ENCODE measurements at regions of chr15 and their contacts with region 1.

Region 1: DNA sequence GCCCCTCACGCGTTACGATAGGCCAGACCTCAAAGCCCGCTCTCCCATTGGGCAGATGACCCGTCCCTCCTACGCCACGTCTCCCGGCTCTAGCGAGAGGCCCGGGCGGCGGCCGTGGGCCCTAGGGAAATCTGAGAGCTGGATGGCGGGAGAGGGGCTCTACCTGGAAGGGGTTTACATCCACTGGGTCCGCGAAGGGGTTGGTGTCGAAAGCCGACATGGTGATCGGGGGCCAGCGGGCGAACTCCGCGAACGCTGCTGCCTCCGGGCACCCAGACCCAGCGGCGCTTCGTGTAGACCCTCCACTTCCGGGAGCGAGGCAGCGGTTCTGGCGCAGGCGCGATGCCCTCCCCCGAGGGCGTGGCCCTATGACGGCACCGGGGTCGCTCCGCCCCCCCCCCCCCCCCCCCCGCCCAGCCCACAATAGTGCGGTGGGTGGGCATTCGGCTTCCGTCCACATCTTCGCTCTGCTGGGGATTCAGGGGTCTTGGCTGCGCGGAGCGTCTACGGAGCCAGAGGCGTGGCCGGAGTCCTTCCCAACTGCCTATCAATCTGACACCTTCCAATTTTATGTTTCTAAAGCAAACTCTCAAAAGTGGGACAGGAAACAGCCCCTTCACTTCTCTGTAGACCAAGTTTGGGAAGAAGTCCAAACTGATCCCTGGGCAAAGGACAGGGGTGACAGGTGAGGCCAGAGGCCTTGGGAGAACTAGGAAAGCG is at the start of gene SCAMP2:
- DNase-seq: peak; percentile 89
- H3K4me3 Mint-ChIP-seq: peak within 1 kb of the TSS; percentile 98
- H3K27ac Mint-ChIP-seq: peak within 1 kb of the TSS; percentile 89
- H3K4me1 Mint-ChIP-seq: peaks cover 34% of the 10 kb centered on the region
- H3K27me3 Mint-ChIP-seq: peaks cover 1% of the 10 kb centered on the region
- total RNA-seq, gene SCAMP2: 85.0 and 90.6 TPM in 2 replicates

Region 2: DNA sequence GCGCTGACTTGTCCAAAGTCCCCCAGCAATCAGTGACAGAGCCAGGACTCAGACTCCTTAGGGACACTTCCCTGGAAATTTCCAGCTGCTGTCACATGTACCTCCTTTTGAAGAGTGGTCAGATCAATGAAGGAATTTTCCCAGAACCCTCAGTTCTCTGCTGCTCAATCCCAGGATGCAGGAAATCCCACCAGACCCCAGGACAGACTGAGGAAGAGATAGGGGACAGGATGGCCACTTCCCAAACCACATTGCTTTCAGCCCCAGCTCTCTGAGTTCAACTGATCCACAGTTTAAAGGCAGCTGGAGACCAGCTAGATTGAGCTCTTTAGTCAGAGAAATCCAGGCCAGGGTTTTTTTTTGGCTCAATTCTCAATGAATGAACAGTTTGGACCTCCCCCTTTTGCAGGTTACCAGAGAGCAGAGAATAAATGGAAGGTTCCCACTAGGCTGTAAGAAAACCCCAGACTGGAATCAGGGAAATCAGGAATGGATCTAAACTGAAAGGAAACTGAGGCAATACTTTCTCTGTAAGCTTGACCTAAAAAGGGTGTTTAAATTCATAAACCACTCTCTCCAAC is 149.4 kb before region 1 on chr15:
- intact Hi-C with region 1: no loop called
- DNase-seq: no peak
- H3K4me3 Mint-ChIP-seq: no peak overlapping the region
- H3K27ac Mint-ChIP-seq: no peak overlapping the region
- H3K4me1 Mint-ChIP-seq: peaks cover 9% of the 10 kb centered on the region
- H3K27me3 Mint-ChIP-seq: peaks cover 13% of the 10 kb centered on the region

Region 3: GRCh38 chr15:74781431-74782258 is 91.6 kb before region 1 on chr15 and contains the start of gene CSK:
- intact Hi-C with region 1: loop called (anchors 2 kb)
- DNase-seq: peak; percentile 77
- H3K4me3 Mint-ChIP-seq: peak within 1 kb of the TSS; percentile 97
- H3K27ac Mint-ChIP-seq: peak within 1 kb of the TSS; percentile 99
- H3K4me1 Mint-ChIP-seq: peaks cover 66% of the 10 kb centered on the region
- H3K27me3 Mint-ChIP-seq: no peaks in the 10 kb centered on the region
- total RNA-seq, gene CSK: 261 and 266 TPM in 2 replicates

Region 4: GRCh38 chr15:74835307-74835823 is 37.8 kb before region 1 on chr15:
- intact Hi-C with region 1: no loop called
- DNase-seq: no peak
- H3K4me3 Mint-ChIP-seq: no peak overlapping the region
- H3K27ac Mint-ChIP-seq: no peak overlapping the region
- H3K4me1 Mint-ChIP-seq: peaks cover 5% of the 10 kb centered on the region
- H3K27me3 Mint-ChIP-seq: no peaks in the 10 kb centered on the region

Region 5: GRCh38 chr15:74889883-74890664 is 16.9 kb after region 1 on chr15 and contains the start of gene MPI:
- intact Hi-C with region 1: loop called (anchors 1 kb)
- DNase-seq: peak; percentile 82
- H3K4me3 Mint-ChIP-seq: peak within 1 kb of the TSS; percentile 82
- H3K27ac Mint-ChIP-seq: peak within 1 kb of the TSS; percentile 81
- H3K4me1 Mint-ChIP-seq: peaks cover 36% of the 10 kb centered on the region
- H3K27me3 Mint-ChIP-seq: no peaks in the 10 kb centered on the region
- total RNA-seq, gene MPI: 66.3 and 71.6 TPM in 2 replicates

Region 6: GRCh38 chr15:74906446-74907162 is 33.4 kb after region 1 on chr15 and contains the start of gene FAM219B:
- intact Hi-C with region 1: loop called (anchors 2 kb)
- DNase-seq: peak; percentile 75
- H3K4me3 Mint-ChIP-seq: peak within 1 kb of the TSS; percentile 91
- H3K27ac Mint-ChIP-seq: peak within 1 kb of the TSS; percentile 88
- H3K4me1 Mint-ChIP-seq: peaks cover 33% of the 10 kb centered on the region
- H3K27me3 Mint-ChIP-seq: no peaks in the 10 kb centered on the region
- total RNA-seq, gene FAM219B: 82.1 and 95.2 TPM in 2 replicates

Region 7: GRCh38 chr15:74937596-74938296 is 64.5 kb after region 1 on chr15 and contains the start of gene COX5A:
- intact Hi-C with region 1: loop called (anchors 5 kb)
- DNase-seq: peak; percentile 92
- H3K4me3 Mint-ChIP-seq: peak within 1 kb of the TSS; percentile 85
- H3K27ac Mint-ChIP-seq: peak within 1 kb of the TSS; percentile 90
- H3K4me1 Mint-ChIP-seq: peaks cover 20% of the 10 kb centered on the region
- H3K27me3 Mint-ChIP-seq: no peaks in the 10 kb centered on the region
- total RNA-seq, gene COX5A: 311 and 333 TPM in 2 replicates

Region 8: DNA sequence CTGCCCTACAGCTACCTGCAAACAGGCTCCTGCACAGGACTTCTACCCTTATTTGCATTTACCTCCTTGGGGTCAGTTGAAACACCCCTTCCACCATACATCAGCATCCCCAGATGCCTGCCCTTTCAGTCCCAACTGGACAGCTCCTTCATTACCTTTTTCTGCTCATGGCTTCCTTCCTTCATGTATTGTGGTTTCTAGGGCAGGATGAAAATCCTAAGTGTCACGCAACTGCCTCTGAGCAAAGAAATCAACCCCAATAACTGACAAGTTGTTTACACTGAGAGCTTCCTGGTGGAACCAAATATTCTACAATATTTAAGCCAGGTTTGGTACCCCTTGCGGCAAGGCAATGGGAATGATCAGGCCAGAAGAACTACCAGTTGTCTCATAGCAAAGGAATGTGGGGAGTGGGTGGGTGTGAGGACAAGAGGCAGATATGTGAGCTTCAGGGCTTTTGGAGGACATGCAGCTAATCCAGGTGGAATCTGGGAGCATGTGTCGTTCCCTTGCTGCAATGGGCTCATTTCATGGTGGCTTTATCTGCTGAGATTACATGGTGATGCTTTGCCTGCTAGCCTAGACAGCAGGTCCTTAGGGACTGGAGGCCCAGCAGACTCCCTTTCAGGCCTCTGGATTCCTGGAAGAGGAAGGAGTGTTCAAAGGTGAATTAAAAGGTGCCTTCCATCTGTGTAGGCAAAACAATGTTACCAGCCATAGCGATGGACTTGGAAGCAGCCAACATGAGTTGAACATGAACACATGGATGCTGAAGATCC is 185.1 kb after region 1 on chr15:
- intact Hi-C with region 1: no loop called
- DNase-seq: no peak
- H3K4me3 Mint-ChIP-seq: no peak overlapping the region
- H3K27ac Mint-ChIP-seq: no peak overlapping the region
- H3K4me1 Mint-ChIP-seq: peaks cover 41% of the 10 kb centered on the region
- H3K27me3 Mint-ChIP-seq: no peaks in the 10 kb centered on the region

Region 9: GRCh38 chr15:75738647-75739331 is 865.6 kb after region 1 on chr15:
- intact Hi-C with region 1: loop called (anchors 5 kb)
- DNase-seq: peak; percentile 88
- H3K4me3 Mint-ChIP-seq: peak overlapping the region; percentile 86
- H3K27ac Mint-ChIP-seq: peak overlapping the region; percentile 23
- H3K4me1 Mint-ChIP-seq: peaks cover 7% of the 10 kb centered on the region
- H3K27me3 Mint-ChIP-seq: peaks cover 32% of the 10 kb centered on the region